AG04450 (cell line): ENCODE measurements at regions of chr6 and their contacts with region 1.

Region 1: GRCh38 chr6:158704181-158704822 is 54.4 kb downstream of the SYTL3 start:
- DNase-seq: no peak
- H3K4me3 ChIP-seq: peak overlapping the region; percentile 61
- H3K27ac ChIP-seq: no peak overlapping the region
- H3K27me3 ChIP-seq: no peaks in the 10 kb centered on the region
- CTCF ChIP-seq: peak; percentile 94

Region 2: DNA sequence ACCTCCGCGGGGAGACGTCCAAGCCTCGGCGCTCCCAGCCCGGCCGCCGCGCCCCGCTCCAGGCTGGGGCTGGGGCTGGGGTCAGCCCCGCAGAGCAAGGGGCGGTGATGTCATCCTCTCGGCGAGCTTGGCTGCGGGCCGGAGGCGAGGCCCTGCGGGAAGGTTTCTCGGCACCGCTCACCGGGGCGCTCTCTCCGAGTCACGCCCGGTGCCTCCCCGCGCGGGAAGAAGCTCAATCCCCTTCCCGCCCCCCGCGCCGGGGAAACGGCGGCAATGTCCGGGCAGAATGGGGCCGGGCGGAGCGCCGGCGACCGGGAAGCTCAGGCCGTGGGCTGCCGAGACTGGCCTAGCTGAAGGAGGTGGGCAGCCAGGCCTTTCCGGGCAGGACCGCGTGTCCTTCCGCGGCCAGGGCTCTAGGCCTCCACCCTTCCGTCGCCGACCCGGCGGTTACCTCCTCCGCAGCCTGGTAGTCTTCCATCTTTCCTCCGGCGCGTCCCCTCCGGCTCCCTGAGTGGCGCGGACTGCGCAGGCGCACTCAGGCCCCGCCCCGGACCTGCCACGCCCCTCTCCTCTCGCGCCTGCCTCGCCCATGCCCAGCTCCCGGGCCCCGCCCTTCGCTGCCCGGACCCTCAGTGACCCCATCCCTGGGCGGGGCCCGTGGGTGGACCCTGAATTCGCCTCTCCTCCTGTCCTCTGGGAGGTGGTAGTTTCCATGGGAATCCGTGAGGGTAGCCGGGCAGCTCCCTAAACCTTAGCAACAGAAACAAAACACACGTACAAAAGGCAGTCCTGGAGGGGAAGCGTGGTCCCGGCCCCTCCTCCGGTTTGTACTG is 59.9 kb before region 1 on chr6 and contains the start of gene DYNLT1:
- CTCF ChIA-PET with region 1: no interaction called
- POLR2A ChIA-PET with region 1: no interaction called
- DNase-seq: no peak
- H3K4me3 ChIP-seq: peak within 1 kb of the TSS; percentile 97
- H3K27ac ChIP-seq: peak within 1 kb of the TSS; percentile 86
- H3K27me3 ChIP-seq: no peaks in the 10 kb centered on the region
- CTCF ChIP-seq: no peak
- polyA plus RNA-seq, gene DYNLT1: 414 and 422 TPM in 2 replicates

Region 3: DNA sequence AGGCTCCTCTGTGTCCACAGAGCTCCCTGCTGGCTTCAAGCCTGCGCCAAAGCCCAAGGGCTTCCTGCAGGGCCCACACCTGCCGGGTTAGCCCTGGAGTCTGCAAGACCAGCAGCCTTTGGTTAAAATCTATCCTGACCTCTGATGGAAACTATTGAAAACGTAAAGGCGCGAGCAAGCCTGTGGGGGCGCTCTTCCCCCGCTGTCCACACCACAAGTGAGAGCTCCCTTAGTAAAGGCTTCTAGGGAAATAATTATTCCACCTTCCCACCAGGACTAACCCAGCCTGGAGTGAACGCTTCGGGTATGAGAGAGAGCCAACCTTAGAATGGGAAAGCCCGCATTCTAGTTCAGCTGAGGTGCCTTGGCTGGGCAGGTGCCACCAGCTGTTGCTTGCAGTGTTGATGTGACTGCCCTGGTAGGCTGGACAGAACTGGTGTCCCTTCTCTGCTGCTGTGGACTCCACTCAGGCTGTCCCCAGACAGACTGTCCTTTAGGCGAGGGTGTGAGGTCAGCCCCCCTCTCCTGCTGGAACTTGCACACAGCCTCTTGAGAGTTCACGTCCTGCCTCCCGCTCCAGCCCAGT is 14.3 kb after region 1 on chr6:
- CTCF ChIA-PET with region 1: interaction called, 17 read pairs
- POLR2A ChIA-PET with region 1: no interaction called
- DNase-seq: no peak
- H3K4me3 ChIP-seq: no peak overlapping the region
- H3K27ac ChIP-seq: no peak overlapping the region
- H3K27me3 ChIP-seq: no peaks in the 10 kb centered on the region
- CTCF ChIP-seq: peak; percentile 57

Region 4: DNA sequence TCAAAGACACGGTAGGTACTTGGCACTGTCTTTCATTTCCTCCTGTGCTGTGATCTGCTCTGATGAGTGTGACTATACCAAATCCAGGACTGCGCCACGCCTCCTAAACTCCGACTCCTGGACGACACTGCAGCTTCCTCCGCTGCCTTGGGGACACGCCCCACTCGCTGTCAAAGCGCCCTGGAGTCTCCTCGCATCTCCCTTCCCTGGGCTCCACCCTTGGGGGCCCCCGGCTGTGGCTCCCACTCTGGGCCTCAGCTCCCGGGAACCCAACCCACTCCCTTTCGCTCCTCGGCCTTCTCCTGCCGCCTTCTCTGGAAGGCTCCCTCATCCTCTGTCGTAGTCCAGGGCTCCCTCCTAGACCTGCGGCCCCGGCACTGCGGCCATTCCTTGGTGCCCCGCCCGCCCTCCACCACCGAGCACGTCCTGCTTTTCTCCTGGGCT is 234.5 kb after region 1 on chr6:
- CTCF ChIA-PET with region 1: interaction called, 10 read pairs
- POLR2A ChIA-PET with region 1: no interaction called
- DNase-seq: no peak
- H3K4me3 ChIP-seq: peak overlapping the region; percentile 20; the same call in 1 of the 2 replicates
- H3K27ac ChIP-seq: no peak overlapping the region
- H3K27me3 ChIP-seq: no peaks in the 10 kb centered on the region
- CTCF ChIP-seq: no peak

Region 5: DNA sequence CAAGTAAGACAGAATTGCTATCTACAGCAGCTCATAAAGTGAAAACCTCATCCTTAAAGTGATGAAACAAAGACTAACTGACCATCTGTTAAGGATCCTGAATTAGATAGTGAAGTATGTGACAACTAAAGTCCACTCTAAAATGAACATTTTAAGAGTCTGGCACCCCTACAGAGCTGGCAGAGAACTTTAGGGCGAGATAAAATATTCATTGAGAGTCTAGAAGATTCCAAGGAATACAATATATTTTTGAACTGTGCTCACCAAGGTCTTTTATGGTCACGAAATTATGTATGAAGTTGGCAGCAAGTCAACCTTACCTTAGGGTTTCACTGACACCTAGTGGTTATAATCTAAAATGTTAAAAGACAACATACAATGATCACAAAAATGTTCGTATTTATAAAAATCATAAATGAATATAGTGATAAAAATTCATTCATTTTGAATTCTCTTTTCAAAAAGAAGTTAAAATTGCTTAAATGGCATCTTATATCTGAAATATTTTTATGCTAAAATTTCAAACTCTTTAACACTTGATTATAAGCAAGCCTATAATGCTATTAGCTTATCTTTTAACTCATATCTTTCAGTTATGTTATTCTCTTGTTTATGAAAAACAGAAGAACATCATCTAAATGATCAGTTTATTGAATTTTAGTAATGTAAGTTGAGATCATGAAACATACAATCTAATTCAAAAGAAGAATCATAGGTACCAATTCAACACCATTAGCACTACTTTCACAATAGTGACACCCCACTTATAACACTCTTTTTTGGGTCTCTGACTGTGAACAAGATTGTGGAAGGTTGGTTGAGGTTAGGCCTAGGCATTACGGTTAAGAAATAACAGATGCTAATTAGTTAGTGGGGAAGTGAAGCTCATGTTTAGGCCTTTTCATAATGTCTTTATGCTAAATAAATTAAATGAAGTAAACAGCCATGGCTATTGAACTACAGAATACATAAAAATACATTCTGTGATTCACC is 268.2 kb after region 1 on chr6:
- CTCF ChIA-PET with region 1: interaction called, 57 read pairs
- POLR2A ChIA-PET with region 1: interaction called, 4 read pairs
- DNase-seq: peak; percentile 11
- H3K4me3 ChIP-seq: no peak overlapping the region
- H3K27ac ChIP-seq: no peak overlapping the region
- H3K27me3 ChIP-seq: no peaks in the 10 kb centered on the region
- CTCF ChIP-seq: peak; percentile 53

Region 6: GRCh38 chr6:159212028-159212427 is 507.7 kb after region 1 on chr6:
- CTCF ChIA-PET with region 1: no interaction called
- POLR2A ChIA-PET with region 1: no interaction called
- DNase-seq: no peak
- H3K4me3 ChIP-seq: no peak overlapping the region
- H3K27ac ChIP-seq: no peak overlapping the region
- H3K27me3 ChIP-seq: no peaks in the 10 kb centered on the region
- CTCF ChIP-seq: no peak